AG04449 (cell line): ENCODE measurements at regions of chr10 and their contacts with region 1.

Region 1: GRCh38 chr10:94443047-94443446 is 40.7 kb downstream of the TBC1D12 start:
- DNase-seq: no peak
- H3K4me3 ChIP-seq: no peak overlapping the region
- CTCF ChIP-seq: no peak

Region 2: GRCh38 chr10:93916257-93917063 is 526.6 kb before region 1 on chr10:
- CTCF ChIA-PET with region 1: interaction called, 56 read pairs
- POLR2A ChIA-PET with region 1: no interaction called
- DNase-seq: no peak
- H3K4me3 ChIP-seq: no peak overlapping the region
- CTCF ChIP-seq: peak; percentile 31

Region 3: DNA sequence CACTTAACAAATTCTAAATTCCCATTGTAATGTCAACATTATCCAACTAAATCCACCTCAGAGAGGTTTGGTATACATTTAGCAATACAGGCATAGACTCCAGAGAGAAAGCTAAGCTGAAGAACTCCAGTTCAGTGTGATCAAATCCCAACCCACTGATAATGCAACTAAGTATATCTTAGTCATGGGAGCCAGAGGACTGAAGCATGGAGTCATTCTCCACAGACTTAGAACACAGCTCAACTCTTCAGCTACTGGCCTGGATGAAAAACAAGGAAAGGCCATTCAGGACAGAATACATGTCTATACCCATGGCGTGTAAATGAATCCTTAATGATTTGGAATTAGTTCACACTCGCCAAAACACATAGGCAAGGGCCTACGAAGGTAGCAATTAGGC is 108.2 kb before region 1 on chr10:
- CTCF ChIA-PET with region 1: interaction called, 20 read pairs
- POLR2A ChIA-PET with region 1: no interaction called
- DNase-seq: no peak
- H3K4me3 ChIP-seq: no peak overlapping the region
- CTCF ChIP-seq: no peak

Region 4: DNA sequence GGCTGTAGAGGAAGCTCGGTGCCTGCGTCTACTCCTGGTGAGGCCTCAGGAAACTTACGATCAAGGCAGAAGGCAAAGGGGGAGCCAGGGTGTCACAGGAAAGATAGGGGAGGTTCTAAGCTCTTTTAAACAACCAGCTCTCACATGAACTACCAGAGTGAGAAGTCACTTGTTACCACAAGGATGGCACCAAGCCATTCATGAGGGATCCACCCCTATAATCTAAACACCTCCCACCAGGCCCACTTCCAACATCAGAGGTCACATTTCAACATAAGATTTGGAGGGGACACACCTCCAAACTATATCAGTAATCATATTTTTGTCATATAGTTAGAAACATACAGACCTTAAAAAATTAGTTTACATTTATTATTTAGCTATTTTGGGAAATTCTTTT is 89.7 kb before region 1 on chr10:
- CTCF ChIA-PET with region 1: interaction called, 36 read pairs
- POLR2A ChIA-PET with region 1: no interaction called
- DNase-seq: no peak
- H3K4me3 ChIP-seq: no peak overlapping the region
- CTCF ChIP-seq: no peak

Region 5: GRCh38 chr10:94370501-94370900 is 72.5 kb before region 1 on chr10:
- CTCF ChIA-PET with region 1: interaction called, 18 read pairs
- POLR2A ChIA-PET with region 1: no interaction called
- DNase-seq: no peak
- H3K4me3 ChIP-seq: no peak overlapping the region
- CTCF ChIP-seq: no peak

Region 6: GRCh38 chr10:94412449-94412848 is 30.6 kb before region 1 on chr10:
- CTCF ChIA-PET with region 1: interaction called, 14 read pairs
- POLR2A ChIA-PET with region 1: no interaction called
- DNase-seq: peak; percentile 68
- H3K4me3 ChIP-seq: no peak overlapping the region
- CTCF ChIP-seq: no peak

Region 7: DNA sequence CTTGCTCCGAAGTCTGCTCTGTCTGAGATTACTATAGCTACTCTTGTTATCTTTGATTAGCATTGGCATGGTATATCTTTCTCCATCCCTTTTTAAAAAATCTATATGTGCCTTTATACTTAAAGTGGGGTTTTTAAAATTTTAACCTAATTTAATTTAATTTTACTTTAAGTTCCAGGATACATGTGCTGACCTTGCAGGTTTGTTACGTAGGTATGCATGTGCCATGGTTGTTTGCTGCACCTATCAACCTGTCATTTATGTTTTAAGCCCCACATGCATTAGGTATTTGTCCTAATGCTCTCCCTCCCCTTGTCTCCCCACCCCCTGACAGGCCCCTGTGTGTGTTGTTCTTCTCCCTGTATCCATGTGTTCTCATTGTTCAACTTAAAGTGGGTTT is 13.9 kb after region 1 on chr10:
- CTCF ChIA-PET with region 1: interaction called, 28 read pairs
- POLR2A ChIA-PET with region 1: no interaction called
- DNase-seq: no peak
- H3K4me3 ChIP-seq: no peak overlapping the region
- CTCF ChIP-seq: no peak

Region 8: GRCh38 chr10:94583124-94583523 is 140.1 kb after region 1 on chr10:
- CTCF ChIA-PET with region 1: no interaction called
- POLR2A ChIA-PET with region 1: no interaction called
- DNase-seq: no peak
- H3K4me3 ChIP-seq: no peak overlapping the region
- CTCF ChIP-seq: no peak

Region 9: DNA sequence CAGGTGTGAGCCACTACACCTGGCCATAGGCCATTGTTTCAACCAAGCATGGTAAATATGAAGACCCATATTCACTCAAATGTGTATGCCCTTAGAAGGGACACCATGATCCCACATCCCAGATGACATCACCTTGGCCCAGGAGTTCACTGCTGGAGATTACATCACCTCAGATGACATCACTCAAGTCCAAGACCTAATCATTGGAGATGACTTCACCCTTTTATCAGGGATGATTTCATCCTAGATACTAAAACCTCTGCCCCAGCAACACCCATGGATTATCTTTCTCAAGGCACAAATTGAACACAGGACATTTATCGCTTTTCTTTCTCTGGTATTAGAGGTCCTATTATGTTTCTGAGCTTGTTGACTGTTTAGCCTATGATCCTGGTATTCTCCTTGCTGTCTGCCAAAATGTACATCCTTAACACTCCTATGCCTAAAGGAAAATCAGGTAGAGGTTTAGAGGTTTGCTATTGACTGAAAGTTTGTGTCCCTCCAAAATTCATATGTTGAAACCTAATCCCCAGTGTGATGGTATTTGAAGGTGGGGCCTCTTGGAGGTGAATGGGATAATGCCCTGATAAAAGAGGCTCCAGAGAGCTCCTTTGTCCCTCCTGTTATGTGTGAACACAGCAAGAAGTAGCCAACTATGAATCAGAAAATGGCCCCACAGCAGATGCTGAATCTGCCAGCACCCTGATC is 230.7 kb after region 1 on chr10:
- CTCF ChIA-PET with region 1: no interaction called
- POLR2A ChIA-PET with region 1: no interaction called
- DNase-seq: no peak
- H3K4me3 ChIP-seq: no peak overlapping the region
- CTCF ChIP-seq: no peak